CD4-positive, alpha-beta memory T cell (primary cell): ENCODE measurements at regions of chr1 and their contacts with region 1.

Region 1: DNA sequence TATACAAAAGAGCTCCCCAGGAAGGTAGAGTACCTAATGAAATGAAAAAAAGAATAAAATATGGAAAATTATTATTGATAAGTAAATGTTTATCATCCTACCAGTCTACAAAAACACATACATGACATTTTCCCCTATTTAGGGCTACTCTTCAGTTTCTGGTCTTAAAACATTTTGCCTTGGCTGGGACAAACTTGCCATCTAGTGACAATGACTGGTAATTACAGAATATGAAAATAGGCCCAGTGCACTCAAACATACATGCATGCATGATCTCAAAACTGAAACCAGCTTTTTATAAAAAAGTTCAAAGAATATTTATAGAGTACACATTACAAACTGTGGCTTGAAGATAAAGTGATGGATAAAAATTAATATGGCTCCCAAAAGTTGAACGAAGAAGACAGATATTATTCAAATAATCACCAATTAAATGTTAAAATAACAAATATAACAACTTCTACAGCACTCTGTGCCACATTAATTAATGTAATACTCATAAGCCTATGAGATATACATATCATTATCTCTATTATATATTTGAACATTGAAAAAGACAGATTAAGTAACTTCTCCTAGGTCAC is 10.5 kb upstream of the RNPC3 start:
- DNase-seq: peak; percentile 50 to 61 (median 56)
- H3K4me3 ChIP-seq: no peak overlapping the region
- H3K4me3 Mint-ChIP-seq: no peak overlapping the region
- H3K27ac ChIP-seq: no peak overlapping the region
- H3K27ac Mint-ChIP-seq: peak overlapping the region in 5 of 7 donors; percentile 52 to 80 (median 67)
- H3K4me1 ChIP-seq: no peaks in the 10 kb centered on the region
- H3K4me1 Mint-ChIP-seq: peaks cover 0 to 6% (median 1%) of the 10 kb centered on the region in 4 donors
- H3K27me3 ChIP-seq: no peaks in the 10 kb centered on the region
- H3K27me3 Mint-ChIP-seq: no peaks in the 10 kb centered on the region

Region 2: DNA sequence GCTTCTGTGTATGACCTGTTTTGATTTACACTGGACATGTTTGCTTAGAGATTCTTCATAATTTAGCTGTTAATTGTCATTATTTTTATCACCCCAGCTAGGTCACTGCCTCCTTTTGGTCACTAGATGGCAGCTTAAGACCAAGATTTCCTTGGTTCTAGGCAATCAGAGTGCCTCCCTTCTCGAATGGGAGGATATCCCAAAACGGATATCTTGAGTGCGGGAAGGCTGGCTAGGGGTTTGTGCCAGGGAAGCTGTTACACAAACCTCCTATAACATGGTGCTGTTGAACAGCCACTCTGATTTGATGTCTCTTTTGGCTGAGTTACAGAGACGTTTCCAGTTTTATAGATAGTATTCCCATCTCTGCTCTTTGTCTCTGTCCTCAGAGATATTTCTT is 1994.7 kb before region 1 on chr1:
- CTCF ChIA-PET with region 1: interaction called, 9 read pairs
- POLR2A ChIA-PET with region 1: no interaction called
- intact Hi-C with region 1: loop called (anchors 1 kb)
- DNase-seq: peak in 4 of 5 donors; percentile 1 to 30 (median 26)
- H3K4me3 ChIP-seq: no peak overlapping the region
- H3K4me3 Mint-ChIP-seq: no peak overlapping the region
- H3K27ac ChIP-seq: no peak overlapping the region
- H3K27ac Mint-ChIP-seq: no peak overlapping the region
- H3K4me1 ChIP-seq: peaks cover 5% of the 10 kb centered on the region
- H3K4me1 Mint-ChIP-seq: peaks cover 0 to 6% (median 2%) of the 10 kb centered on the region in 4 donors
- H3K27me3 ChIP-seq: no peaks in the 10 kb centered on the region
- H3K27me3 Mint-ChIP-seq: peaks cover 9 to 14% of the 10 kb centered on the region in 2 donors

Region 3: GRCh38 chr1:101567582-101568189 is 1947.3 kb before region 1 on chr1:
- CTCF ChIA-PET with region 1: no interaction called
- POLR2A ChIA-PET with region 1: no interaction called
- intact Hi-C with region 1: loop called (anchors 1 kb)
- DNase-seq: peak; percentile 27 to 50 (median 41)
- H3K4me3 ChIP-seq: no peak overlapping the region
- H3K4me3 Mint-ChIP-seq: no peak overlapping the region
- H3K27ac ChIP-seq: no peak overlapping the region
- H3K27ac Mint-ChIP-seq: no peak overlapping the region
- H3K4me1 ChIP-seq: no peaks in the 10 kb centered on the region
- H3K4me1 Mint-ChIP-seq: no peaks in the 10 kb centered on the region
- H3K27me3 ChIP-seq: no peaks in the 10 kb centered on the region
- H3K27me3 Mint-ChIP-seq: peaks cover 15 to 16% of the 10 kb centered on the region in 2 donors

Region 4: DNA sequence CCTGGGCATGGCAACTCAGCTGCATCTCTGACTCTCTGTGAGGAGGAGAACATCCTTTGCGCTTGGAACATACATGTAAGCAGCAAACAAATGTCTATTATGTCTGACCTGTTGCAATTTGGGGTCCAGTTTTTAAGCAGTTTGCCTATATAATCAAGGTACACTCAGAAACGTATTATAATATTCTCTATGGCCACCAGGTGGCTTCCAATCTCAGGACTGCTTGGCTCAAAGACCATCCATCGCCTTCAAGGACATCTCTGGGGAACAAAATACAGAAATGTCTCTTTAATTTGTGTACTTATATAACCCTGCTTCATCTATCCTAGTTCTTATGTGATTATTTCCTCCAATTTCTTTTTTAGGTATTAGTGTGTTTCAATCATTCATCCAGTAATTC is 1745.5 kb before region 1 on chr1:
- CTCF ChIA-PET with region 1: no interaction called
- POLR2A ChIA-PET with region 1: no interaction called
- intact Hi-C with region 1: loop called (anchors 2 kb)
- DNase-seq: no peak
- H3K4me3 ChIP-seq: no peak overlapping the region
- H3K4me3 Mint-ChIP-seq: no peak overlapping the region
- H3K27ac ChIP-seq: no peak overlapping the region
- H3K27ac Mint-ChIP-seq: no peak overlapping the region
- H3K4me1 ChIP-seq: no peaks in the 10 kb centered on the region
- H3K4me1 Mint-ChIP-seq: no peaks in the 10 kb centered on the region
- H3K27me3 ChIP-seq: no peaks in the 10 kb centered on the region
- H3K27me3 Mint-ChIP-seq: no peaks in the 10 kb centered on the region

Region 5: DNA sequence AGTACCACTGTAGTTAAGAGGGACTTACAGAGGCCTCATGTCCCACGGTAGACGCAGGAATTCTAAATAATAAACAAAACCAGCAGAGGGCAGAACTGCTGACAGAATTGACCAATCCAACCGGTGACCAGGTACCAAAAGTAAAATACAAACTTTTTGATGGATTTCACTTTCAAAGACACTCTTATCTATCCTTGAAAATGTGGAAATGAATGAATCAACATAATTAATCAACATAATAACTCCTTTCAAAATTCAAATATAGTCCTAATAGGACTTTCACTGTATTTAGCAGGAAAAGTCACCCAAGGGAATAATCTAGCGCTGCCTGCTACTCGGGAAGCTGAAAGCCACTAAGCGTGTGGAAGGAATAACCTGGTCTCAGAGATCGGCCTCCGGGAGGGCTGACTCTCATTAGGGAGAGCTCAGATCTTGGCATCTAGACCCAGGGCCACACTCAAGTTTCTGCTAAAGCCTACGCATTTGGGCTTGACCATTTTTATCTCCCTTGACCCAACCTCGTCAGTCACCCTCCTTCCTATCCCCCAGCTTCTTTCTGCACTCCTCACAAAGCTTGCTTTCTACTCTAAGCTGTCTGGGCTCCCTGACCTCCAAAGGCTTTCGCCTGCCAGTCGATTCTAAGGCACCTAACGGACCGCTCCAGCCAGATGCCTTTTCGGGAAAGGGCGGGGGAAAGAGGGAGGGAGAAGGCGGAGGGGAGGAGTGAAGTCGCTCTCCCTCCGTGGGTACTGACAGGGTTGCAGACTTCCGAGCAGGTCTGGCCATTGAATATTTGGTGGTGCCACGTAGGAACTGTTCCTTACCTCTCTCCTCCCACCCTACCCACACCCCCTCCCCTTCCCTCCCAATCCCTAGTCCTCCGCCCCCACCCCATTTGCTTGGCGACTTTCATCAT is 408.3 kb before region 1 on chr1:
- CTCF ChIA-PET with region 1: interaction called, 4 read pairs
- POLR2A ChIA-PET with region 1: no interaction called
- intact Hi-C with region 1: loop called (anchors 5 kb)
- DNase-seq: no peak
- H3K4me3 ChIP-seq: no peak overlapping the region
- H3K4me3 Mint-ChIP-seq: peak overlapping the region in 5 of 8 donors; percentile 25 to 63 (median 29)
- H3K27ac ChIP-seq: no peak overlapping the region
- H3K27ac Mint-ChIP-seq: no peak overlapping the region
- H3K4me1 ChIP-seq: peaks cover 7% of the 10 kb centered on the region
- H3K4me1 Mint-ChIP-seq: peaks cover 6 to 11% (median 8%) of the 10 kb centered on the region in 4 donors
- H3K27me3 ChIP-seq: no peaks in the 10 kb centered on the region
- H3K27me3 Mint-ChIP-seq: peaks cover 14 to 17% of the 10 kb centered on the region in 2 donors

Region 6: DNA sequence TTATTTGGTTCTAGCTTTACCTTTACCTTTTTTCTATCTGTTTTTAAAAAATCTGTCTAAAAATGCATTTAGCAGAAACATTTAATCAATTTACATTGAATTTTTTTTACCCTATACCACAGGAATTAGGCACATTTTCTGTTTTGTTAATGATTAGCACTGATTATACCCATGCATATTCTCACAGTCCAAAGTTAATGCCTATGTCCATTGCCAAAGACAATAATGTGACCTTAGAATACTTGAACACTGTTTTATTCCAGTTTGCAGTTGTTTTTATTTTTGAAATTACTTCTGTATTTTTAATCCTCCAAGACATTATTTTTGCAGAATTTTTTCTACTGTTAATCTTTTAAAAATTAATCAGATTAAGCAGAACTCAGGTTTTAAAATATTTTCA is 45.4 kb after region 1 on chr1:
- CTCF ChIA-PET with region 1: no interaction called
- POLR2A ChIA-PET with region 1: no interaction called
- intact Hi-C with region 1: no loop called
- DNase-seq: no peak
- H3K4me3 ChIP-seq: no peak overlapping the region
- H3K4me3 Mint-ChIP-seq: no peak overlapping the region
- H3K27ac ChIP-seq: no peak overlapping the region
- H3K27ac Mint-ChIP-seq: no peak overlapping the region
- H3K4me1 ChIP-seq: no peaks in the 10 kb centered on the region
- H3K4me1 Mint-ChIP-seq: peaks cover 0 to 2% (median 1%) of the 10 kb centered on the region in 4 donors
- H3K27me3 ChIP-seq: no peaks in the 10 kb centered on the region
- H3K27me3 Mint-ChIP-seq: no peaks in the 10 kb centered on the region